ENCODE measurements at regions of chr21 and their contacts with region 1.

Region 1: GRCh38 chr21:42337830-42338728 is 12.7 kb downstream of the TFF2 start:
- DNase-seq: peak; percentile 61
- ATAC-seq: peak; percentile 100
- H3K4me3 Mint-ChIP-seq: no peak overlapping the region
- H3K27ac Mint-ChIP-seq: no peak overlapping the region
- H3K4me1 Mint-ChIP-seq: peaks cover 10% of the 10 kb centered on the region
- H3K27me3 Mint-ChIP-seq: peaks cover 13% of the 10 kb centered on the region
- CTCF ChIP-seq: no peak

Region 2: GRCh38 chr21:42309753-42310221 is 28.3 kb before region 1 on chr21:
- CTCF ChIA-PET with region 1: interaction called, 20 read pairs
- POLR2A ChIA-PET with region 1: no interaction called
- intact Hi-C with region 1: no loop called
- DNase-seq: peak; percentile 43
- ATAC-seq: peak; percentile 71
- H3K4me3 Mint-ChIP-seq: no peak overlapping the region
- H3K27ac Mint-ChIP-seq: no peak overlapping the region
- H3K4me1 Mint-ChIP-seq: peaks cover 6% of the 10 kb centered on the region
- H3K27me3 Mint-ChIP-seq: peaks cover 18% of the 10 kb centered on the region
- CTCF ChIP-seq: no peak